Right ventricle myocardium inferior (tissue), 1 donor: ENCODE measurements at regions of chr6 and their contacts with region 1.

Region 1: GRCh38 chr6:27814660-27815424 is 97.4 kb downstream of the OR2B2 start:
- DNase-seq: no peak
- ATAC-seq: peak; percentile 79

Region 2: DNA sequence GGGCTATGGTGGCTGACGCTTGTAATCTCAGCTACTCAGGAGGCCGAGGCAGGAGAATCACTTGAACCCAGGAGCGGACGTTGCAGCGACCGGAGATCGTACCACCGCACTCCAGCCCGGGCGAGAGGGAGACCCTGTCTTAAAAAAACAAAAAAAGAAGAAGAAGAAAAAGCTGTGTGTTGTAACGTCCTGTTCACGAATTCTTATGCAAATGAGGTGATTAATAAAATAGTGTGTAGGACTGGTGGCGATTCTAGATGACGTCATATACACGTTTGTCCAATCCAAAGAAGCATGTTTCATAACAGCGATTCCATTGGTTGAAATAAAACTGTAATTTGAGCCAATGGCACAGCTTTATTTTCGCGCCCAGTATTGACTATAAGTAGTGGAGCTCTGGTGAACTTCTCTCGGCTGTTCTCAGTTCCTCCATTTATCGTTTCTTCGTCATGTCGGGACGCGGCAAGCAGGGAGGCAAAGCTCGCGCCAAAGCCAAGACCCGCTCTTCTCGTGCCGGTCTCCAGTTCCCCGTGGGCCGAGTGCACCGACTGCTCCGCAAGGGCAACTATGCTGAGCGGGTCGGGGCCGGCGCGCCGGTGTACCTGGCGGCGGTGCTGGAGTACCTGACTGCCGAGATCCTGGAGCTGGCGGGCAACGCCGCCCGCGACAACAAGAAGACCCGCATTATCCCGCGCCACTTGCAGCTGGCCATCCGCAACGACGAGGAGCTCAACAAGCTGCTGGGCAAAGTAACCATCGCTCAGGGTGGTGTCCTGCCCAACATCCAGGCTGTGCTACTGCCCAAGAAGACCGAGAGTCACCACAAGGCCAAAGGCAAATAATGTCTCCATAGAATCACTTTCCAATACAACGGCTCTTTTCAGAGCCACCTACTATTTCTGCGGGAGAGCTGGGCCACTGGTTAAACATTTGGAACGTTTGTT is 50.3 kb after region 1 on chr6:
- intact Hi-C with region 1: loop called (anchors 5 kb)
- DNase-seq: peak; percentile 85
- ATAC-seq: peak; percentile 87